CD4-positive, alpha-beta T cell (primary cell): ENCODE measurements at regions of chr17 and their contacts with region 1.

Region 1: DNA sequence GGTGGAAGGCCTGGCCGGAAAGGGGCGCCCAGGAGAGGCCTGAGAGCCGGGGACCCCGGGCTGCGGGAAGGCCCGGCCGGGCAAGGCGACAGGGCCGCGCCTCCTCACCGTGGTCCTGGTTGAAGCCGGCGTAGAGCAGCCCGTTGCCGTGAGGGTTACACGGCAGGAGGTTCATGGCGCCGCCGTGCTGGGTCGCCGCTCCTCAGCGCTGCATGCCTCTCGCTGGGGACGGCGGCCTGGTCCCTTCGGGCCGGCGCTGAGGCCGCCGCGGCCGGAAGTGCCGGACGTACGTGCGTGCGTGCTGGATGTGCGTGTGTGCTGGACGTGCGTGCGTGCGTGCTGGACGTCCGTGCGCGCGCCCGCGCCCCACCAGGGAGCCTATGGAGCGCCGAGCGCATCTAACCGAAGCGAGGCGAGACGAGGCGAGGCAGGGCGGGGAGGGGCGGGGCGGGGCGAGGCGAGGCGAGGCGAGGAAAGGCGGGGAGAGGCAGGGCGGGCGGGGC is at the start of gene WDR45B:
- DNase-seq: peak; percentile 78 to 96 (median 87)
- ATAC-seq: peak; percentile 80
- H3K4me3 ChIP-seq: peak within 1 kb of the TSS; percentile 77
- H3K4me3 Mint-ChIP-seq: peak within 1 kb of the TSS; percentile 87
- H3K27ac ChIP-seq: peak within 1 kb of the TSS; percentile 78 to 80
- H3K27ac Mint-ChIP-seq: peak within 1 kb of the TSS; percentile 69
- H3K4me1 ChIP-seq: peaks cover 36% of the 10 kb centered on the region
- H3K4me1 Mint-ChIP-seq: peaks cover 29% of the 10 kb centered on the region
- H3K27me3 ChIP-seq: no peaks in the 10 kb centered on the region
- H3K27me3 Mint-ChIP-seq: no peaks in the 10 kb centered on the region
- CTCF ChIP-seq: no peak
- total RNA-seq, gene WDR45B: 49.8 to 54.3 TPM

Region 2: GRCh38 chr17:82450170-82451106 is 197.8 kb before region 1 on chr17 and contains the start of gene CYBC1:
- CTCF ChIA-PET with region 1: no interaction called
- POLR2A ChIA-PET with region 1: no interaction called
- intact Hi-C with region 1: loop called in 1 of 2 experiments (anchors 5 kb)
- DNase-seq: peak; percentile 89 to 98 (median 96)
- ATAC-seq: peak; percentile 66
- H3K4me3 ChIP-seq: peak within 1 kb of the TSS; percentile 97
- H3K4me3 Mint-ChIP-seq: peak within 1 kb of the TSS; percentile 97
- H3K27ac ChIP-seq: peak within 1 kb of the TSS; percentile 90 to 96
- H3K27ac Mint-ChIP-seq: peak within 1 kb of the TSS; percentile 97
- H3K4me1 ChIP-seq: peaks cover 50% of the 10 kb centered on the region
- H3K4me1 Mint-ChIP-seq: peaks cover 48% of the 10 kb centered on the region
- H3K27me3 ChIP-seq: no peaks in the 10 kb centered on the region
- H3K27me3 Mint-ChIP-seq: no peaks in the 10 kb centered on the region
- CTCF ChIP-seq: no peak
- total RNA-seq, gene CYBC1: 60.2 to 62.4 TPM

Region 3: GRCh38 chr17:82592767-82593589 is 55.2 kb before region 1 on chr17:
- CTCF ChIA-PET with region 1: no interaction called
- POLR2A ChIA-PET with region 1: no interaction called
- intact Hi-C with region 1: loop called in 1 of 2 experiments (anchors 5 kb)
- DNase-seq: peak; percentile 26 to 87 (median 56)
- ATAC-seq: peak; percentile 33
- H3K4me3 ChIP-seq: peak overlapping the region; percentile 66
- H3K4me3 Mint-ChIP-seq: peak overlapping the region; percentile 85
- H3K27ac ChIP-seq: peak overlapping the region; percentile 56 to 83
- H3K27ac Mint-ChIP-seq: peak overlapping the region; percentile 87
- H3K4me1 ChIP-seq: peaks cover 43% of the 10 kb centered on the region
- H3K4me1 Mint-ChIP-seq: peaks cover 41% of the 10 kb centered on the region
- H3K27me3 ChIP-seq: no peaks in the 10 kb centered on the region
- H3K27me3 Mint-ChIP-seq: no peaks in the 10 kb centered on the region
- CTCF ChIP-seq: no peak

Region 4: GRCh38 chr17:82698065-82698973 is 50.1 kb after region 1 on chr17 and contains the start of gene RAB40B:
- CTCF ChIA-PET with region 1: no interaction called
- POLR2A ChIA-PET with region 1: no interaction called
- intact Hi-C with region 1: loop called in 1 of 2 experiments (anchors 2 kb)
- DNase-seq: peak; percentile 98 to 100 (median 99)
- ATAC-seq: peak; percentile 97
- H3K4me3 ChIP-seq: peak within 1 kb of the TSS; percentile 48
- H3K4me3 Mint-ChIP-seq: peak within 1 kb of the TSS; percentile 95
- H3K27ac ChIP-seq: no peak within 1 kb of the TSS
- H3K27ac Mint-ChIP-seq: peak within 1 kb of the TSS; percentile 21
- H3K4me1 ChIP-seq: peaks cover 18% of the 10 kb centered on the region
- H3K4me1 Mint-ChIP-seq: peaks cover 10% of the 10 kb centered on the region
- H3K27me3 ChIP-seq: peaks cover 0 to 6% of the 10 kb centered on the region in 2 experiments
- H3K27me3 Mint-ChIP-seq: no peaks in the 10 kb centered on the region
- CTCF ChIP-seq: no peak
- total RNA-seq, gene RAB40B: 1.6 to 2.0 TPM

Region 5: DNA sequence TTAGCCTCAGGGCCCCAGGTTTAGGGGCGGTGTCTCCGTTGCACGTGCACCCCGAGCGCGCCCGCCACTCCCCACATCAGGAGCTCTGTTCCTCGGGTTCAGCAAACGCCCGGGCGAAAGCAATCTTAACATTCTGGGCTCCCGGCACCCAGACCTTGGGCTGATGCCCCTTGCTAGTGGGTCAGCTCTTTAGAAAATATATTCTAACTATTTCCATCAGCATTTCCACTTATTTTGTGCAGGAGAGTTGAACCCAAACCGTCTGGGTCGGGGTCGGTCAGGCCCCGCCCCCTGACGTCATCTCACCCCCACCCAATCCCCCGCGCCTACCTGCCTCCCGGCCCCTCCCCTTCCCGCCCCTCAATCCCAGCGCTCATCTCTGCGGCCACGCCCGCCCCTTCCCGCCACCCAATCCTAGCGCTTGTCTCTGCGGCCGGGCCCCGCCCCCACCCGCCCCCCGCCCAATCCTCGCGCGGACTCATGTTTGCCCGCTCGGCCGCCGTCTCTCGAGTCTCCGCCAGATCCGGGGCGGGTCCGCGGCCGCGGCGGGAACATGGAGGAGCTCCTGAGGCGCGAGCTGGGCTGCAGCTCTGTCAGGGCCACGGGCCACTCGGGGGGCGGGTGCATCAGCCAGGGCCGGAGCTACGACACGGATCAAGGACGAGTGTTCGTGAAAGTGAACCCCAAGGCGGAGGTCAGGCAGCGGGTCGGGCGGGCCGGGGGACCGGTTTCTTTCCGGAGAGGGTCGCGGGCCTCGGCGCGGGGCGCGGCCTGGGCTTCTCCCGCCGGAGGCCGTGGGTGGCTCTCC is 68.2 kb after region 1 on chr17 and contains the start of gene FN3KRP:
- CTCF ChIA-PET with region 1: no interaction called
- POLR2A ChIA-PET with region 1: no interaction called
- intact Hi-C with region 1: loop called in 1 of 2 experiments (anchors 5 kb)
- DNase-seq: peak; percentile 69 to 99 (median 87)
- ATAC-seq: peak; percentile 87
- H3K4me3 ChIP-seq: peak within 1 kb of the TSS; percentile 72
- H3K4me3 Mint-ChIP-seq: peak within 1 kb of the TSS; percentile 97
- H3K27ac ChIP-seq: peak within 1 kb of the TSS; percentile 5 to 50
- H3K27ac Mint-ChIP-seq: peak within 1 kb of the TSS; percentile 56
- H3K4me1 ChIP-seq: peaks cover 24% of the 10 kb centered on the region
- H3K4me1 Mint-ChIP-seq: peaks cover 31% of the 10 kb centered on the region
- H3K27me3 ChIP-seq: no peaks in the 10 kb centered on the region
- H3K27me3 Mint-ChIP-seq: no peaks in the 10 kb centered on the region
- CTCF ChIP-seq: no peak
- total RNA-seq, gene FN3KRP: 30.6 to 31.2 TPM

Region 6: GRCh38 chr17:82751571-82752370 is 103.6 kb after region 1 on chr17 and contains the start of gene TBCD:
- CTCF ChIA-PET with region 1: interaction called, 4 read pairs
- POLR2A ChIA-PET with region 1: no interaction called
- intact Hi-C with region 1: loop called in 1 of 2 experiments (anchors 1 kb)
- DNase-seq: peak; percentile 77 to 96 (median 89)
- ATAC-seq: peak; percentile 71
- H3K4me3 ChIP-seq: peak within 1 kb of the TSS; percentile 63
- H3K4me3 Mint-ChIP-seq: peak within 1 kb of the TSS; percentile 89
- H3K27ac ChIP-seq: peak within 1 kb of the TSS in 1 of 2 donors; percentile 41
- H3K27ac Mint-ChIP-seq: no peak within 1 kb of the TSS
- H3K4me1 ChIP-seq: peaks cover 32% of the 10 kb centered on the region
- H3K4me1 Mint-ChIP-seq: peaks cover 25% of the 10 kb centered on the region
- H3K27me3 ChIP-seq: no peaks in the 10 kb centered on the region
- H3K27me3 Mint-ChIP-seq: no peaks in the 10 kb centered on the region
- CTCF ChIP-seq: no peak
- total RNA-seq, gene TBCD: 74.6 to 80.3 TPM

Region 7: DNA sequence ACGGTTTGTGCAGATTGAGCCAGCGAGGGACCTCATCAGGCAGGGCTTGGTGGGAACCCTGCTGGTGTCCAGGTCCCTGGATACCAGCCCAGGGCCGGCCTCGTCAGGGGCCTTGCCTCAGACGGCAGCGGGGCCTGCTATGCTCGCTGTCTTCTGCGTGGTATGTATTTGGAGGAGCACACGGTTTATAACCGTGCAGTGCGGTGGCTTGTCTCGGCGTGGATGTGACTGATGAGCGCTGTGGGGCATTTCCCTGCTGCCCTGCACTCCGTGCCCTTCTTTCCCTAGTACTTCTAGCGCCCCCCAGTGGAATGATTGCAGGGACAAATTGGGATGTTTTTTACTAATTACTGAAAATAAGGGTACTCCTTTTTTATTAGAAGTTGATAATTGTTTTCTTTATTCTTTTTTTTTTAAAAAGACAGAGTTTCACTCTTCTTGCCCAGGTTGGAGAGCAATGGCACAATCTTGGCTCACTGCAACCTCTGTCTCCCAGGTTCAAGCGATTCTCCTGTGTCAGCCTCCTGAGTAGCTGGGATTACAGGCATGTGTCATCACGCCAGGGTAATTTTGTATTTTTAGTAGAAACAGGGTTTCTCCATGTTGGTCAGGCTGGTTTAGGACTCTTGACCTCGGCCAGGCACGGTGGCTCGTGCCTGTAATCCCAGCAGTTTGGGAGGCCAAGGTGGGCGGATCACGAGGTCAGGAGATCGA is 119.0 kb after region 1 on chr17:
- CTCF ChIA-PET with region 1: no interaction called
- POLR2A ChIA-PET with region 1: no interaction called
- intact Hi-C with region 1: loop called in 1 of 2 experiments (anchors 2 kb)
- DNase-seq: peak in 8 of 14 experiments; percentile 12 to 62 (median 34)
- ATAC-seq: no peak
- H3K4me3 ChIP-seq: no peak overlapping the region
- H3K4me3 Mint-ChIP-seq: no peak overlapping the region
- H3K27ac ChIP-seq: no peak overlapping the region
- H3K27ac Mint-ChIP-seq: no peak overlapping the region
- H3K4me1 ChIP-seq: peaks cover 4% of the 10 kb centered on the region
- H3K4me1 Mint-ChIP-seq: peaks cover 13% of the 10 kb centered on the region
- H3K27me3 ChIP-seq: no peaks in the 10 kb centered on the region
- H3K27me3 Mint-ChIP-seq: no peaks in the 10 kb centered on the region
- CTCF ChIP-seq: peak; percentile 54